HCT116 (cell line): ENCODE measurements at regions of chr7 and their contacts with region 1.

Region 1: DNA sequence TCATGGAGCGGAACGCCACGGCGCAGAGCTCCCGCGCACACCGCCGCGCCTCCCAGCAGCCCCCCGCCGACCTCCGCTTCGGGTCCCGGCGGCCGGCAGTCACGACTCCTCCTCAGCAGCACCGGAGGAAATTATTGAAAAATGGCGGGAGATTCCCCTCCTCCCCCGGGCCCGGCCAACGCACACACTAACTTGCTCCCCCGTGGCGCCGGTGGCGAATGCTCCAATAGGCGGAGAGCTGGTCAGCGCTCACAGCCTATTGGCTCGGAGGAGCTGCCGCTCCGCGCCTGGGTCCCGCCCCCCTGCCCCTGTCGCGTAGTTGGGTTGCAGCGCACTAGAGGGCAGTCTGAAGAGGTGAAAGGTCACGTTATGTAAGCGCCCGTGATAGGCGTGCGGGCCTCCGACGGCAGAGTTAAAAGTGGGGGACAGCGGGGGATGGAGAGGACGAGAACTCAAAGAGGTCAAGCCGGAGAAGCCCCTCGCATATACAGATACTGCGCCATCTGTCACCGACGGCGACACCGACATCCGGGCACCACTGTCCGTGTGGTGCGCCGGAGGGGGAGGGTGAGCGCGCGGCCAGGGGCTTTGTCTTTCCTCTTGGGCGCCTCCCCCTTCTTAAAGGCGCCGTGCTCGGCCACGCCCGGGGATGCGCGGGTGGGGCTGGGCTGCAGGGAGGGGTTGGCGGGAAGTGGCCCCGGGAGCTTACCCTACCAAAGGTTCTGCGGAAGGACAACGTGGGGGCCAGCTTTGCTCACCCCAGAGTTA is at the start of gene BAZ1B:
- DNase-seq: peak; percentile 96
- ATAC-seq: peak; percentile 93
- H3K4me3 ChIP-seq: peak within 1 kb of the TSS; percentile 86 to 87
- H3K27ac ChIP-seq: peak within 1 kb of the TSS; percentile 96
- H3K4me1 ChIP-seq: peaks cover 15 to 27% of the 10 kb centered on the region in 2 experiments; a peak in 3 of 4 replicates
- H3K27me3 ChIP-seq: no peaks in the 10 kb centered on the region
- CTCF ChIP-seq: no peak; a peak in 1 of 6 replicates
- POLR2A ChIP-seq: no peak
- RAD21 ChIP-seq: no peak
- total RNA-seq, gene BAZ1B: 81.1 TPM

Region 2: GRCh38 chr7:73437621-73438416 is 84.5 kb before region 1 on chr7:
- CTCF ChIA-PET with region 1: no interaction called
- POLR2A ChIA-PET with region 1: no interaction called
- RAD21 ChIA-PET with region 1: no interaction called
- intact Hi-C with region 1: no loop called
- DNase-seq: no peak
- ATAC-seq: no peak
- H3K4me3 ChIP-seq: no peak overlapping the region
- H3K27ac ChIP-seq: no peak overlapping the region
- H3K4me1 ChIP-seq: peaks cover 0 to 10% of the 10 kb centered on the region in 2 experiments; a peak in 3 of 4 replicates
- H3K27me3 ChIP-seq: no peaks in the 10 kb centered on the region
- CTCF ChIP-seq: no peak
- POLR2A ChIP-seq: no peak
- RAD21 ChIP-seq: no peak

Region 3: DNA sequence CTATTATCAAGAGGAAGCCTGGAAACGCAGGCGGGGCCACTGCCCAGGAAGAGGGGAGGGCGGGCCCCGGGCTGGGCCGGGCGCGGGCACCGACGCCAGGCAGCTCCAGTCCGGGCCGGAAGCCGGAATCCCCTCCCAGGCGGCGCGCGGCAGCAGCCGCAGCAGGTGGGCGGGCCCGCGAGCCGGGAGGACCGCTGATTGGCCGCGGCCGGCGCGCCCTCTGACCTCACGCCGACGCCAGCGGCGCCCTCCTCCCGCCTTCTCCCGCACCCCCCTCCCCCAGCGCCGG is 34.8 kb after region 1 on chr7:
- CTCF ChIA-PET with region 1: no interaction called
- POLR2A ChIA-PET with region 1: interaction called, 5 read pairs
- RAD21 ChIA-PET with region 1: no interaction called
- intact Hi-C with region 1: loop called (anchors 1 kb)
- DNase-seq: peak; percentile 75
- ATAC-seq: peak; percentile 91
- H3K4me3 ChIP-seq: peak overlapping the region; percentile 94 to 99
- H3K27ac ChIP-seq: peak overlapping the region; percentile 99
- H3K4me1 ChIP-seq: peaks cover 16 to 35% of the 10 kb centered on the region in 2 experiments
- H3K27me3 ChIP-seq: no peaks in the 10 kb centered on the region
- CTCF ChIP-seq: no peak
- POLR2A ChIP-seq: no peak
- RAD21 ChIP-seq: no peak